RWPE1 (cell line): ENCODE measurements at regions of chr21 and their contacts with region 1.

Region 1: GRCh38 chr21:42593007-42593806 is 60.2 kb upstream of the PDE9A start:
- DNase-seq: peak; percentile 92
- H3K27ac ChIP-seq: no peak overlapping the region
- CTCF ChIP-seq: peak; percentile 76

Region 2: DNA sequence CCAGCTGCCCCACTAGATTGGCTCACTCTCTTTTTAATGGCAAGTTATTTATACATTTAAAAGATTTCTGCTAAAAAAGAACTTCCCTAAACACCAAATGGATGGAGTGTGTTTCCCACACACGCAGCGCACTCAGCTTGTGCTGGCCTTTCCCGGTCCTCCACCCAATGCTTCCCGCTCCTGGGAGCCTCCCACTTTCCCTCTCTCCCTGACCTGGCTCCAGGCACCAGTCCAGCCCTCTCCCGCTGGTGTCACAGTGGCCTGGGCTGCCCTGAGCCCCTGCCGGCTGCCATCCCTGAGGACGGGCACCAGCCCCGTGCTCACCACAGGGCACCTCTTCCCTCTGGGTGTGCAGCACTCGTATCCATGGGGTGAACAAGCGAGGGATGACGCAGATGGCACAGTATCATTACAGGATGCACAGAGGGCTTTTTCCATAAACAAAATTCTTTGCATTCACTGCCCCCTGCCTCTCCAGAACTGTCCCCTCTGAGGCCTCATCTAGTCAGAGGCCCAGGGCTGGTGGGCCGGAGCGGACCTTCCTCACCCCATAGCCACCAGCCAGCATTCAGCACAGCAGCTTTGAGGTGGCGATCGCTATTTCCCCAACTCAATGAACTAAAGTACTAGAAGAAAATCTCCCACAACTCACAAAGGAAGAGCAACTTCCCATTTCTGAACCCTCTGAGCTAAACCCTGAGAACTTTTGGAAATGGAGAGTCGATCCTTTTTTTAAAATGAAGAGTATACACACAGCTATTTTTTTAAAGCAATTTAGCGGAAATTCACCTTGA is 11.0 kb before region 1 on chr21:
- CTCF ChIA-PET with region 1: interaction called, 11 read pairs
- POLR2A ChIA-PET with region 1: no interaction called
- DNase-seq: no peak
- H3K27ac ChIP-seq: no peak overlapping the region
- CTCF ChIP-seq: no peak

Region 3: GRCh38 chr21:42799516-42799915 is 206.3 kb after region 1 on chr21:
- CTCF ChIA-PET with region 1: no interaction called
- POLR2A ChIA-PET with region 1: no interaction called
- DNase-seq: peak; percentile 52
- H3K27ac ChIP-seq: no peak overlapping the region
- CTCF ChIP-seq: no peak